GM12878 (cell line): ENCODE measurements at regions of chr1 and their contacts with region 1.

Region 1: DNA sequence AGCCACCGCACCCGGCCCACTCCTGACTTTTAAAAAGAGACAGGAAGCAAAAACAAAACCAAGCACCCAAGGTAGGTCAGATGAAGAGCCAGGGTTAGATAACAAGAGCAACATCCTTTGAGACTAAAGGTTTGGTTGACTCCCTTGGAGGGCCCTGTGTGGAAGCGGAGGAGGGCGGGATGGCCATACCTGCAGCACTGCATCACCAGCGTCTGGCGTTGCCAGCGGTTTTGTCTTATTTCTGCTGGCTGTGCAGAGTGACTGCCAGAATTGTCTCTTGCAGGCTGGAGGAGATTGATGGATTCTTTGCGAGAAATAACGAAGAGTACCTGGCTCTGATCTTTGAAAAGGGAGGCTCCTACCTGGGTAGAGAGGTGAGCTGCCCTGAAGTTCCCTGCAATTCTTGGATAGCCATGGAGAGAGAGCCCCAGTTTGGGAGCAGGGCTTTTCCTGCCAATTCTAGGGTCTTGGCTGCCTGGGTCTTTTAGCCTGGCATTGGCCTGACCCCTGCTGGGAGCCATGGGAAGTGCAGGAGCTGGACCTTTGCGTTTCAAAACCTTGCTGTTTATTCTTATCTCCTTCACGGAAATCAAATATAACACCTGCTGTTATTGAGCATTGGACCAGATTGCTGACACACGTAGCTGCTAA is 24.0 kb downstream of the QSOX1 start:
- DNase-seq: no peak
- ATAC-seq: peak; percentile 82
- H3K4me3 ChIP-seq: no peak overlapping the region
- H3K27ac ChIP-seq: no peak overlapping the region
- H3K4me1 ChIP-seq: no peaks in the 10 kb centered on the region
- H3K27me3 ChIP-seq: no peaks in the 10 kb centered on the region
- CTCF ChIP-seq: peak; percentile 97 to 99 (median 98)
- EP300 ChIP-seq: no peak
- POLR2A ChIP-seq: no peak
- RAD21 ChIP-seq: peak; percentile 97

Region 2: GRCh38 chr1:179369751-179370341 is 808.8 kb before region 1 on chr1:
- CTCF ChIA-PET with region 1: no interaction called
- POLR2A ChIA-PET with region 1: no interaction called
- RAD21 ChIA-PET with region 1: no interaction called
- SMC1A ChIA-PET with region 1: no interaction called
- in situ Hi-C with region 1: no loop called
- intact Hi-C with region 1: no loop called
- DNase-seq: peak; percentile 33
- ATAC-seq: peak; percentile 56
- H3K4me3 ChIP-seq: no peak overlapping the region
- H3K27ac ChIP-seq: no peak overlapping the region
- H3K4me1 ChIP-seq: no peaks in the 10 kb centered on the region; the same call in 1 of the 2 replicates
- H3K27me3 ChIP-seq: 0 out of 4 replicates have a peak, but pooled peaks cover 0 to 2% of the 10 kb centered on the region in 2 experiments
- CTCF ChIP-seq: peak; percentile 49 to 72 (median 56)
- EP300 ChIP-seq: no peak
- POLR2A ChIP-seq: no peak
- RAD21 ChIP-seq: peak; percentile 74

Region 3: DNA sequence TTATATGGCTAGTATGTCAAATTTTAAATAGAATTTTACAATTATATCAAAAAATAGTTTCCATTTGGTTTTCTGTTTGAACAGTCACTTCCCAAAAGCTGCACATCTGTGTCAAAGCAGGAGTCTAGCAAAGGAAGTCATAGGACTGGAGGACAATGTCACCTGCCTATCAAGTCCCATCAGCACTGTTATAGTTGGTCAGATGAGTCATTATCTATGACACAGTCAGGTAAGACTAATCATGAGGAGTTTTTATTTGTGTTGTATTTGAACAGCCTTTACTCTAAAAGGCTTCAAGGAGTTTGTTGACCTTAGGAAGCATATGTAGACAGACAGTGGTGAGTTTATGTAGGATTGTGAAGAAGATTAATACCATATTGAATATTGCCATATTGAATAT is 98.2 kb before region 1 on chr1:
- CTCF ChIA-PET with region 1: interaction called, 14 read pairs
- POLR2A ChIA-PET with region 1: no interaction called
- RAD21 ChIA-PET with region 1: interaction called, 4 read pairs
- SMC1A ChIA-PET with region 1: interaction called, 6 read pairs
- in situ Hi-C with region 1: no loop called
- intact Hi-C with region 1: no loop called
- DNase-seq: no peak
- ATAC-seq: no peak
- H3K4me3 ChIP-seq: no peak overlapping the region
- H3K27ac ChIP-seq: no peak overlapping the region
- H3K4me1 ChIP-seq: no peaks in the 10 kb centered on the region
- H3K27me3 ChIP-seq: no peaks in the 10 kb centered on the region
- CTCF ChIP-seq: no peak
- EP300 ChIP-seq: no peak
- POLR2A ChIP-seq: no peak
- RAD21 ChIP-seq: no peak

Region 4: DNA sequence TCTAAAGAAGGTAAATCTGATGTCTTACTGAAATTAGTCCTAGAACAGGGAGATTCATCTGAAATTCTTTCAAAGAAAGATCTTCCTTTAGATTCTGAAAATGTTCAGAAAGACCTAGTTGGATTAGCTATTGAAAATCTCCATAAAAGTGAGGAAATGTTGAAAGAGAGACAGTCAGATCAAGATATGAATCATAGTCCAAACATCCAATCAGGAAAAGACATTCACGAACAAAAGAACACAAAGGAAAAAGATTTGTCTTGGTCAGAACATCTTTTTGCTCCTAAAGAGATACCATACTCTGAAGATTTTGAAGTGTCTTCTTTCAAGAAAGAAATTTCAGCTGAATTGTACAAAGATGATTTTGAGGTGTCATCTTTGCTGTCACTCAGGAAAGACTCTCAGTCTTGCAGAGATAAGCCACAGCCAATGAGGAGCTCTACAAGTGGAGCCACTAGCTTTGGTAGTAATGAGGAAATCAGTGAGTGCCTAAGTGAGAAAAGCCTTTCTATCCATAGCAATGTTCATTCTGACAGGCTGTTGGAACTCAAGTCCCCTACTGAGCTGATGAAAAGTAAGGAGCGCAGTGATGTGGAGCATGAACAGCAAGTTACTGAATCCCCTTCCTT is 85.6 kb before region 1 on chr1:
- CTCF ChIA-PET with region 1: interaction called, 9 read pairs
- POLR2A ChIA-PET with region 1: no interaction called
- RAD21 ChIA-PET with region 1: interaction called, 3 read pairs
- SMC1A ChIA-PET with region 1: interaction called, 11 read pairs
- in situ Hi-C with region 1: no loop called
- intact Hi-C with region 1: loop called (anchors 5 kb)
- DNase-seq: no peak
- ATAC-seq: no peak
- H3K4me3 ChIP-seq: no peak overlapping the region
- H3K27ac ChIP-seq: no peak overlapping the region
- H3K4me1 ChIP-seq: no peaks in the 10 kb centered on the region
- H3K27me3 ChIP-seq: no peaks in the 10 kb centered on the region
- CTCF ChIP-seq: no peak
- EP300 ChIP-seq: no peak
- POLR2A ChIP-seq: no peak
- RAD21 ChIP-seq: no peak

Region 5: GRCh38 chr1:180101411-180101810 is 77.2 kb before region 1 on chr1:
- CTCF ChIA-PET with region 1: interaction called, 18 read pairs
- POLR2A ChIA-PET with region 1: no interaction called
- RAD21 ChIA-PET with region 1: interaction called, 4 read pairs
- SMC1A ChIA-PET with region 1: interaction called, 7 read pairs
- in situ Hi-C with region 1: no loop called
- intact Hi-C with region 1: no loop called
- DNase-seq: no peak
- ATAC-seq: no peak
- H3K4me3 ChIP-seq: no peak overlapping the region
- H3K27ac ChIP-seq: no peak overlapping the region
- H3K4me1 ChIP-seq: no peaks in the 10 kb centered on the region
- H3K27me3 ChIP-seq: no peaks in the 10 kb centered on the region
- CTCF ChIP-seq: no peak
- EP300 ChIP-seq: no peak
- POLR2A ChIP-seq: no peak
- RAD21 ChIP-seq: no peak

Region 6: DNA sequence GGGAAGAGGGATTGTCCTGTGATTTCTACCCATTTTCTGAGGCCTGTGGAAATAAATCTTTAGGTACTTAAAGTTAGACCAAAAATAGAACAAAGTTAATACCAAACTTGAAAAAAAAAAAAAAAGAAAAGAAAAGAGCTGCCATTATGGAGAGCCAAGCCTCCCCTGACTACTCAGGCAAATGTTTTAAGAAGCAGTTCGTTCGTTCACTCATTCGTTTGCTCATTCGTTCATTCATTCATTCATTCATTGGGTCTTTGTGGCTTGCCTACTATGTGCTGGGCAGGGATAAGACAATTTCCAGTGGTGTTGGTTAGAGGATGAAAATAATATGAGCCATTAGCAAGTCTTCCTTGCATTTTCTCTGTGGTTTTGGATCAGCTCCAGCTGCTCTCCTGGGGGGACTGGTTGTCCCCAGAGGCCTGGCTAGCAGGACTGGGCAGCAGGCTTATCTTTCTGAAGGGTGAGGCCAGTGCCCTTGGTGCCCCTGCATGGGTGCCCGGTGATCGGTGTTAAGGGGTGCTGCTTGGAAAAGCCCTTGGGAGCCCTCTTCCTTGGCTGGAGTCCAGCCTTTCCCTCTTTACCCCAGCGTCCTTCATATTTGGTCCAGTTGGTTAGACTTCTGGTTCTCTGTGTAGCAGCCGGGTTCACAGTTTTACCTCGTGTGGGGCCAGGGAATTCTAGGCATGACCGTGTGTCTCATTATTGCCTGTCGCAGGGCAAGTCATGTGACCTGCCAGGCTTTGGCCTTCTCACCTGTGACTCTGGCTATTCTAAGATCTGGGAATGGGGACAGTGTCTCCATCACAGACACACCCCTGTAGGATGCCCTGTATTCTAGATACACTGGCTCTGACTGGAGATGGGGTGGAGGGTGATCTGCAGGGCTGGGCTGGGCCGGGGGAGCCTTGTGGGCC is 84.2 kb after region 1 on chr1:
- CTCF ChIA-PET with region 1: no interaction called
- POLR2A ChIA-PET with region 1: no interaction called
- RAD21 ChIA-PET with region 1: no interaction called
- SMC1A ChIA-PET with region 1: no interaction called
- in situ Hi-C with region 1: no loop called
- intact Hi-C with region 1: no loop called
- DNase-seq: no peak
- ATAC-seq: no peak
- H3K4me3 ChIP-seq: no peak overlapping the region
- H3K27ac ChIP-seq: no peak overlapping the region
- H3K4me1 ChIP-seq: no peaks in the 10 kb centered on the region
- H3K27me3 ChIP-seq: no peaks in the 10 kb centered on the region
- CTCF ChIP-seq: no peak
- EP300 ChIP-seq: no peak
- POLR2A ChIP-seq: no peak
- RAD21 ChIP-seq: no peak